Activated T-helper 2 cell treated with anti-CD3 and anti-CD28 coated beads, Interferon-gamma antibody, Interleukin-2, Interleukin-4, amounts not matched to agents 10 μg/mL and 5 μg/mL and 100 μg/mL, durations not matched to agents 14 hours and 24 hours and 36 hours (primary cell): ENCODE measurements at regions of chr18 and their contacts with region 1.

Region 1: GRCh38 chr18:23828426-23828825 is 139.2 kb downstream of the LAMA3 start:
- DNase-seq: peak; percentile 52
- H3K4me3 Mint-ChIP-seq: no peak overlapping the region
- H3K27ac Mint-ChIP-seq: peak overlapping the region; percentile 76
- H3K4me1 Mint-ChIP-seq: peaks cover 46% of the 10 kb centered on the region
- H3K27me3 Mint-ChIP-seq: no peaks in the 10 kb centered on the region

Region 2: GRCh38 chr18:23619388-23619881 is 209.0 kb before region 1 on chr18:
- intact Hi-C with region 1: no loop called
- DNase-seq: no peak
- H3K4me3 Mint-ChIP-seq: no peak overlapping the region
- H3K27ac Mint-ChIP-seq: no peak overlapping the region
- H3K4me1 Mint-ChIP-seq: no peaks in the 10 kb centered on the region
- H3K27me3 Mint-ChIP-seq: peaks cover 42% of the 10 kb centered on the region

Region 3: DNA sequence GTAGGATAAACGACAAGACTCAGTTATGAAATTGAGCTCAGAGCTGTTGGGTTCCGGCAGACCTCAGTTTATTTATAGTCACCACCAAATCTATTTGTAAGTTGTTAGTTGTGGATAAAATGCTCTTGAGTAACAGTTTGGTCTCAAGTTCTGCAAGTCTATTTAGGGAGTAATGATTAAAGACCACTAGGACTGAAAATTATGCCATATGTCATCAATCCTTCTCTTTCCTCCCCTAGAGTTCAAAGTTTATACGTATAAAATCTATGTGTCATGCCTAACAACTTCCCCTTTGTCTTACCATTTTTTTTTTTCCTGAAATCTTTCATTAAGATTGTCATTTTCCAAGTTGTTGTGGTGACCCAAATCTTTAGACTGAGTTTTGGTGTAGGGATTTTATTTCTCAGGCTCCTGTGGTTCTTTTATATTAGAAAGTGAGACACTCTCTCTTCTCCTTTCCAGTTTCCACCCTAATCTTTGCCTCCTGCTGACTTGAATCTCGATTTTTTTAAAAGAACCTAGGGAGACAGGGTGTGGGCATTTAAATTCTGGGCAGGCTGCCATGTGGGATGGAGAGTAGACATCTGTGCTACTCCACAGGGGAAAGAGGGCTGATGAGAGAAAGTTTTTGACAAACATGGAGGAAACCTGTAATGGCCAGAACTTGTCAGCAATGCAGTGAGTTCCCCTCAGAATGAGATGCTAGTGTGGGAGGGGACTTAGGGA is 88.2 kb before region 1 on chr18:
- intact Hi-C with region 1: no loop called
- DNase-seq: no peak
- H3K4me3 Mint-ChIP-seq: no peak overlapping the region
- H3K27ac Mint-ChIP-seq: no peak overlapping the region
- H3K4me1 Mint-ChIP-seq: peaks cover 8% of the 10 kb centered on the region
- H3K27me3 Mint-ChIP-seq: peaks cover 51% of the 10 kb centered on the region

Region 4: DNA sequence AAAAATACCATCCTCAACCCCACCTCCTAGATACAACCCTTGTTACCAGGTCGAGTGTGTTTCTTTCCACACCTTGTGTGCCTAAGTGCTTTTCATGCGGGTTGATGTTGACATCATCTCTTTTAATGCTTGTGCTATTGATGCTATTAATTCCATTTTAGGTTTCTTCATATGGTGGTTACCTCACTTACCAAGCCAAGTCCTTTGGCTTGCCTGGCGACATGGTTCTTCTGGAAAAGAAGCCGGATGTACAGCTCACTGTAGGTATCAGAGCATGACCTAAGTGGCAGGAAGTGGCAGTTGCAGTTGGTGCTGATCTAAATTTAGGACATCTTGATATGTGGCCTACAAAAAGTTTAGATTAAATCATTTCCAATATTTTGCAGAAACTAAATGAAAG is 36.2 kb after region 1 on chr18:
- intact Hi-C with region 1: loop called (anchors 5 kb)
- DNase-seq: peak; percentile 26
- H3K4me3 Mint-ChIP-seq: no peak overlapping the region
- H3K27ac Mint-ChIP-seq: peak overlapping the region; percentile 72
- H3K4me1 Mint-ChIP-seq: peaks cover 49% of the 10 kb centered on the region
- H3K27me3 Mint-ChIP-seq: no peaks in the 10 kb centered on the region

Region 5: DNA sequence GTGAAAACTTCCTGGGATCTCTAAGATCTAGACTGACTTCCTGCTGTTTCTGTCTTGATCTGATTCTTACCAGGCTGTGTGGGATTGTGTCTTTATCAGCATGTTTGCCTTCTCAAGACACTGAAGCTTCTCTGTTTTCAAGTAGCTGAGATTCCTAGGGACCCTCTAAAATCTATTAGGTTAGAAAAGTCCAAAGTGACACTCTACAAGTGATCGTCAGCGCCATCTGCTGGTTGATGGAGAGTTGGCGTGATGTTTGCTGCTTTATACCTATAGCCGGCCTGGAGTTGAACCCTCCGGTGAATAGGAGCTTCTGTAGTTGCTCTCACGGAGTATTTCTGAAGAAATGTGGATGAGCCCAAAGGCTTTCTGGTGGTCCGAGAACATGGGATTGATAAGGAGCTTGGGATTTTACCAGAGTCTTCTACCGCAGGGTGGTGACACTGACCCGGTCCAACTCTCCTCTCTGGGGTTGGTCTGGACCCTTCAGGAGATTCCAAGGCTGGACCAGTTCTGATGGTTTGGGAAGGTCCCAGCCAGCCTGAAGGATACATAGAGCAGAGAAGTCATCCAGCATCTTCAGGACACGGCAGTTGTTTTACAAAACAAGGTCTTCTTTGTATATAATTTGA is 90.1 kb after region 1 on chr18:
- intact Hi-C with region 1: loop called (anchors 2 kb)
- DNase-seq: peak; percentile 58
- H3K4me3 Mint-ChIP-seq: no peak overlapping the region
- H3K27ac Mint-ChIP-seq: no peak overlapping the region
- H3K4me1 Mint-ChIP-seq: peaks cover 19% of the 10 kb centered on the region
- H3K27me3 Mint-ChIP-seq: peaks cover 28% of the 10 kb centered on the region

Region 6: DNA sequence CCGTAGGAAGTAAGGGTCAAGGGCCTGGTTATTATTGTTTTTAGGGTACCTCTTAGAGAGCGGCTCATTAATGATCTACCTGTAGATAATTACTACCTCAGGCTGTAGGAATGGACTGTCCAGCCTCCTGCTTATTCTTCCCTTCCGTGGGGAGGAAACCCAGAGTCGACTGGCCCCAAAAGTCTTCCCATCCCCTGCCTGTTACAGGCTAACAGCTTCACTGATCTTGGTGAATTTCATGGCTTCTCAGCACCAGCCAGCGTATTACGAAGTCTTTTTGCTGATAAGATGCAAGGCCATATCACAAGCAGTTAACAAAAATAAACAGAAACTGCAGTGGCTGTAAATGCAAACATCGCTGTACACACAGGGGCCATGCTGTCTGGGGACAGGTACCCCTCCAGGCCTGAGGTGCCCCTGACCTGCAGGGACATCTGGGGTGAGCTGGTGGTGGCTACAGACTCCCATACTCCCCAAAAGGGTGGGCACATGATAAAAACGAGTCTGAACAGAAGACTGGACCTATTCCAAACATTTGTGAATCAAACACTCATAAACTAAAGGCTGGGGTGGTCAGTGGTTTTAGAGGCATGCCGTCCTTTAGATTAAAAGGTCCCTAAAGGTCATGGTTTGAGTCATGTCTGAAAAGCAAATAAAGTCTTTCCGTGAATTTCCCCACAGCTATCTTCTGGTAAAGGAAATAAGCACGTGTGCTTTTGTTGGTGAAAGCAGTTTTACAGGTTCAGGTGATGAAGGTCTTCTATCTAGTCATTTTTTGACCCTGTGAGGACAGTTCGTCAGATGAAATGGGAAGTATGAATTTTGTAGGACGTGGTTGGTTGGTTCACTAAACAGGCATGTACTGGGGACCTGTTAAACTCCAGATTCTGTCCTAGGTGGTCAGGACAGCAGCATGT is 222.9 kb after region 1 on chr18:
- intact Hi-C with region 1: loop called (anchors 10 kb)
- DNase-seq: no peak
- H3K4me3 Mint-ChIP-seq: peak overlapping the region; percentile 33
- H3K27ac Mint-ChIP-seq: peak overlapping the region; percentile 80
- H3K4me1 Mint-ChIP-seq: peaks cover 62% of the 10 kb centered on the region
- H3K27me3 Mint-ChIP-seq: no peaks in the 10 kb centered on the region

Region 7: DNA sequence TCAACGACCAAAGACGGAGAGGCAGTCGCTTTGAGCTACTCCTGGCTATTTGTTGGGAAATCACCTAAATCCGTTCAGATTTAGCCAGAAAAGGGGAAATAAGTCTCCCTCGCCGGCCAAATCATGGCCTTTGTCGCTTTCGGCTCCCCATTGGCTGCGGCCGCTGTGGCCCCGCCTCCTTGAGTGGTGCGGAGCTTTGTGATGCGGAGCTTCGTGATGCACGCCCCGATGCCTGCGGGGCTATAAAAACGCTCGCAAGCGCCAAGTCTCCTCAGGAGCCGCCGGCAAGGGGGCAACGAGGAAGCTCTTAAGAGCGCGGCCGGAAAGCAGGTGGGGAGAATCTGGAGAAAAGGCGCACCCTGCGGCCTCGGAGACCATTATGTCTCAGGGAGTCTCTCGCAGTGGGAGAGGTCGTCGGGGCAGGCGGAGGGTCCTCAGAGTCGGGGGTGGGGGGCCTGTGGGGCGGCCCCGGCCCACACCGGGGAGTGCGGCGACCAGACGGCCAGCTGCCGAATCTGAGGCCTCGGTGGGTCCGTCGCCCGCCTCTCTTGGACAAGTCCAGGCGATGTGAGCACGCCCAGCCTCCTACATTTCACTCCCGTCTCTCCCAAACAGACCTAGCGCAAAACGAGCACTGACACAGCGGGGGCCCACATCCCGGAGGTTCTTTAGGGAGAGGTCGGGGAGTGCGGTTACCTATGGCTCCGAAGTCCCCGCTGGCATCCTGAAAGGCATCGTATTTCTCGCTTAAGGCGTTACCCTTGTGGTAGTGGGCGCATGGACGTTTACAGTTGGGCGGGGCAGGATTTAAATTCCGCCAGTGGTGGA is 310.6 kb after region 1 on chr18 and contains the start of gene CABYR:
- intact Hi-C with region 1: loop called (anchors 5 kb)
- DNase-seq: peak; percentile 55
- H3K4me3 Mint-ChIP-seq: peak within 1 kb of the TSS; percentile 84
- H3K27ac Mint-ChIP-seq: no peak within 1 kb of the TSS
- H3K4me1 Mint-ChIP-seq: peaks cover 18% of the 10 kb centered on the region
- H3K27me3 Mint-ChIP-seq: peaks cover 24% of the 10 kb centered on the region
- total RNA-seq, gene CABYR: 0.16 TPM in 2 replicates